HEK293 (cell line): ENCODE measurements at regions of chr1 and their contacts with region 1.

Region 1: DNA sequence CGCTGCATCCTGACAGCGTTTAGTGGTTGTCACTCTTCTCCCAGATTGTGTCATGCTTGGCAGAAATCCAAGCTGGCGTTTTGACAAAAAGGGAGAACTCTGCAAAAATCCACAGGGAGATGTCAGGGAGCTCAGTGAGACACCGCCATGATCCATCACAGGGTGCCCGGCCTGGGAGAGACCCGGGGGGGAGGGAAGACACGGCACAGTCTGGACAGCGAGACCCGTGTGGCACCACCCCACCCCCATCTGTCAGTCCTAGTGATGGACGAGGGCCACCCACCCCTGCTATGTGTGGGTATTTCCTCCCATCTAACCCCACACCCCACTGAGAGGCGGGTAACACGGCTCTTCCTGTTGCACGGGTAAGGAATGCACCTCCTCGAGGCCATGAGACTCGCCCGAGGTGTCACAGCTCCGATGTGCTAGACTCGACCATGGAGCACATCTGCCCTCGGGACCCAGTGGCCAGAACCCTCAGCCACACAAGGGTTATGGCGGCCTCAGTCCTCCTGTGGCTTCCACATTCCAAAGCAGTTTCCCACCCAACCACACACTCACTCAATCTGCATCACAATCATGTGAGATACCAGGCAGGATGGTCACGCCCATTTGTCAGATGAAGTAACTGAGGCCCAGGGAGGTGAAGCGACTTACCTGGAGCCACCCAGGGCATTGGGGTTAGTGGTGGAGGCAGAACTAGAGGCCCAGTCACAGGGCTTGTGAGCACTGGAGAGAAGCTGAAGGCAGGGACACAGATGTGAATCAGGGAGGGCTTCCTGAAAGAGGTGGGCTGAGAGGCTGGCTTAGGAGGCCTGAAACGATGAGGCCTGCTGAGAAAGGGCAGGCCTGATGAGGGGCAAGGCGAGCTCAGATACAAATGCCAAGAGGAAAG is 688.5 kb downstream of the MATN1 start:
- H3K4me3 ChIP-seq: no peak overlapping the region; the same call in 1 of the 2 replicates
- H3K27ac ChIP-seq: no peak overlapping the region
- H3K4me1 ChIP-seq: 0 out of 2 replicates have a peak, but pooled peaks cover 2% of the 10 kb centered on the region
- CTCF ChIP-seq: no peak

Region 2: GRCh38 chr1:29921741-29922140 is 113.1 kb before region 1 on chr1:
- CTCF ChIA-PET with region 1: no interaction called
- POLR2A ChIA-PET with region 1: no interaction called
- H3K4me3 ChIP-seq: no peak overlapping the region
- H3K27ac ChIP-seq: no peak overlapping the region
- H3K4me1 ChIP-seq: no peaks in the 10 kb centered on the region
- CTCF ChIP-seq: no peak

Region 3: GRCh38 chr1:30045304-30046090 is 10.6 kb after region 1 on chr1:
- CTCF ChIA-PET with region 1: no interaction called
- POLR2A ChIA-PET with region 1: no interaction called
- H3K4me3 ChIP-seq: no peak overlapping the region
- H3K27ac ChIP-seq: no peak overlapping the region
- H3K4me1 ChIP-seq: no peaks in the 10 kb centered on the region
- CTCF ChIP-seq: no peak

Region 4: GRCh38 chr1:30058632-30059574 is 24.0 kb after region 1 on chr1:
- CTCF ChIA-PET with region 1: no interaction called
- POLR2A ChIA-PET with region 1: no interaction called
- H3K4me3 ChIP-seq: no peak overlapping the region
- H3K27ac ChIP-seq: no peak overlapping the region
- H3K4me1 ChIP-seq: no peaks in the 10 kb centered on the region
- CTCF ChIP-seq: no peak

Region 5: GRCh38 chr1:30085811-30086770 is 51.2 kb after region 1 on chr1:
- CTCF ChIA-PET with region 1: interaction called, 19 read pairs
- POLR2A ChIA-PET with region 1: no interaction called
- H3K4me3 ChIP-seq: no peak overlapping the region
- H3K27ac ChIP-seq: no peak overlapping the region
- H3K4me1 ChIP-seq: peaks cover 10% of the 10 kb centered on the region; the same call in 1 of the 2 replicates
- CTCF ChIP-seq: peak; percentile 85

Region 6: GRCh38 chr1:30145723-30146303 is 110.9 kb after region 1 on chr1:
- CTCF ChIA-PET with region 1: no interaction called
- POLR2A ChIA-PET with region 1: no interaction called
- H3K4me3 ChIP-seq: no peak overlapping the region
- H3K27ac ChIP-seq: no peak overlapping the region
- H3K4me1 ChIP-seq: no peaks in the 10 kb centered on the region
- CTCF ChIP-seq: no peak